ENCODE measurements at regions of chr2 and their contacts with region 1.

Region 1: GRCh38 chr2:70086838-70087701 is at the start of gene PCBP1:
- DNase-seq: peak; percentile 95 to 98 (median 97)
- H3K4me3 ChIP-seq: peak within 1 kb of the TSS; percentile 3 to 91 (median 79)
- H3K27ac ChIP-seq: peak within 1 kb of the TSS; percentile 96 to 100 (median 99)
- H3K4me1 ChIP-seq: peaks cover 33 to 41% of the 10 kb centered on the region in 2 donors
- H3K27me3 ChIP-seq: no peaks in the 10 kb centered on the region
- CTCF ChIP-seq: no peak
- POLR2A ChIP-seq: peak; percentile 85
- total RNA-seq, gene PCBP1: 32.8 to 511 (median 242) TPM

Region 2: GRCh38 chr2:70142590-70143313 is 55.7 kb after region 1 on chr2:
- intact Hi-C with region 1: loop called (anchors 5 kb)
- DNase-seq: peak; percentile 99 to 100 (median 100)
- H3K4me3 ChIP-seq: peak overlapping the region in 2 of 4 donors; percentile 33 to 68
- H3K27ac ChIP-seq: peak overlapping the region; percentile 84 to 100 (median 98)
- H3K4me1 ChIP-seq: peaks cover 11 to 19% of the 10 kb centered on the region in 2 donors
- H3K27me3 ChIP-seq: no peaks in the 10 kb centered on the region
- CTCF ChIP-seq: peak; percentile 89 to 100 (median 99)
- POLR2A ChIP-seq: peak; percentile 69 to 85